ENCODE measurements at regions of chr6 and their contacts with region 1.

Region 1: DNA sequence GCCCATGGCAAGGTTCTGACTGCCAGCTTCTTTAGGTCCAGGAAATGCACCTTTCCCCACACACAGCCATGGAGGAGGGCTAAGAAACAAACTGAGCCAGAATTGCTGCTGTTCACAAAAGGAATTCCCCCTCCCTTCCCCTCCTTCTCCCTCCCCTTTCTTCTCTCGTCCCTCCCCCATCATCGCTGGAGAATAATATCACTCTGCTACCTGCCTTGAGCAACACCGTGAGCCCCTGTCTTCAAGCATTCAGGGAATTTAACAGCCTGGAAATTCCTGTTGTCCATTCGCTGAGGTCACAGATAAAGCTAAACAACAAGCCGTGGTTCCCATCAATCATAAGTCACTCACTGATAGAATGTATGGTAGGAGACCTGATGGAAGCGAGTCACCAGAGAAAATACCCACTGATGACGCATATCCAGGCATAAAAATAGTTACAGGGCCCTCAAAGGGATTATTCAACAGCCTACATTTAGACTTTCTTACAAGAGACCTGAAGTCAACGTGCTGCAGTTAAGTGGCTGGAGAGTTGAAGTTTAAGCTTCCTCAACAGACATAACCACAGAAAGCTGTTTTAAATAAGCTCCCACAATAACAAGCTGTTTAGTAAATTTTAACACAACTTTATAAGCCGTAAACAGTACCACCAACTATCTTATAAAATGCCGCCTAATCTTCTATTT is 59.7 kb downstream of the HIVEP2 start:
- DNase-seq: peak in 10 of 14 experiments; percentile 17 to 93 (median 48)
- ATAC-seq: peak; percentile 85
- H3K4me3 ChIP-seq: peak overlapping the region; percentile 45
- H3K4me3 Mint-ChIP-seq: peak overlapping the region; percentile 95
- H3K27ac ChIP-seq: peak overlapping the region; percentile 75 to 81
- H3K27ac Mint-ChIP-seq: peak overlapping the region; percentile 91
- H3K4me1 ChIP-seq: peaks cover 43% of the 10 kb centered on the region
- H3K4me1 Mint-ChIP-seq: peaks cover 93% of the 10 kb centered on the region
- H3K27me3 ChIP-seq: no peaks in the 10 kb centered on the region
- H3K27me3 Mint-ChIP-seq: no peaks in the 10 kb centered on the region
- CTCF ChIP-seq: no peak

Region 2: DNA sequence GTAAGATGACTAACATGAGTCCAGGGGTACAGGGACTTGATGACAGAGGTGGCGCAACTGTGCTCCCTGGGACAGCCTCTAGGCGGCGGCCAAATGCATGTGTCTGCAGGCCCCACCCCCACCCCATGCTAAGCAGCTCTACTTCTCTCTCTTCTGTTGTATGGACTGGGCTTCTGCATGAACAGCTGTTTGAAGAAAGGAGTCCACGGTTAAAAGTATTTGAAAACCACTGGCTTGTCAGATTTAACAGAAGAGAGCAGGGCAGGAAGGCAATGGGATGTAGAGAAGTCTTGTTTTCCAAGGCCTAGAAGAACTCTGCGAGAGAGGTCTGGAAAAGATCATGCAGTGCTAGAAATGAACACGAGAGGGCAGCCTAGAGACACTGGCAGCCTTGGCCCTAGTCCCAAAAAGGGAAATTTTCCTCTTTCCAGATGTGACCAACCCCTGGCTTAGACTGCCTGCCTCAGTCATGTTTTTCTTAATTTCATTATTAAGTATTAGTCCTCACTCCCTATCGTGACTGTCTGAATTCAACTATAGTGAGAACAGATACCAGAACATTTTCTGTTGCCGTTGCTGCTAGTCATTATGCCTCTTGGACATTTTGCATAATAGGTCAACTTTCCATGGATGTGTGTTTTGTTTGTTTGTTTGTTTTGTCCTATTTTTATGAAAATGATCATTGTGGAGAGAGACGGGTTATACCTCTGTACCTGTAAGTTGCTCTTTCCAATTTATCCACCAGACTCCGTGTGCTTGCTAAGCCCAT is 318.5 kb before region 1 on chr6:
- CTCF ChIA-PET with region 1: no interaction called
- POLR2A ChIA-PET with region 1: interaction called, 3 read pairs
- intact Hi-C with region 1: loop called in 1 of 2 experiments (anchors 10 kb)
- DNase-seq: peak; percentile 14 to 76 (median 47)
- ATAC-seq: peak; percentile 62
- H3K4me3 ChIP-seq: no peak overlapping the region
- H3K4me3 Mint-ChIP-seq: peak overlapping the region; percentile 57
- H3K27ac ChIP-seq: no peak overlapping the region
- H3K27ac Mint-ChIP-seq: peak overlapping the region; percentile 79
- H3K4me1 ChIP-seq: peaks cover 35% of the 10 kb centered on the region
- H3K4me1 Mint-ChIP-seq: peaks cover 77% of the 10 kb centered on the region
- H3K27me3 ChIP-seq: no peaks in the 10 kb centered on the region
- H3K27me3 Mint-ChIP-seq: no peaks in the 10 kb centered on the region
- CTCF ChIP-seq: peak; percentile 82

Region 3: DNA sequence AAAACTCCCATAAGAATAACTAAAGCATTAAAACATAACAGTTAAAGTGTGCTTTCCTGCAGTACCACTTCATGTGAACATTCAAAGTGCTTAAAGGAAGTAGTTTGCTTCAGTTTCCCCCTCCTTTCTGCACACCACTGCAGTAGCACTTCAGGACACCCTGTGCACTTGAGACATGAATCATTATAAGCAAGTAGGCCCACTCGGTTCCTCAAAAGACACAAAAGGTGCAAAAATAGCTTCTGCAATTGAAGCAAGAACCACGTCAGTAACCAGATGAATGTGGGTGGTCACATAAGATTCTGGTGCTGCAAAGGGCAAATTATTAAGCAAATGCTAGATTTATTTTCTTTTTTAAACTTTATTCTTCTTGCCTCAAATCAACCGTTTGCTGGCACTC is 101.0 kb before region 1 on chr6:
- CTCF ChIA-PET with region 1: no interaction called
- POLR2A ChIA-PET with region 1: no interaction called
- intact Hi-C with region 1: loop called (anchors 5 kb)
- DNase-seq: peak in 4 of 14 experiments; percentile 32 to 52 (median 39)
- ATAC-seq: peak; percentile 75
- H3K4me3 ChIP-seq: no peak overlapping the region
- H3K4me3 Mint-ChIP-seq: peak overlapping the region; percentile 48
- H3K27ac ChIP-seq: no peak overlapping the region
- H3K27ac Mint-ChIP-seq: peak overlapping the region; percentile 70
- H3K4me1 ChIP-seq: peaks cover 12% of the 10 kb centered on the region
- H3K4me1 Mint-ChIP-seq: peaks cover 73% of the 10 kb centered on the region
- H3K27me3 ChIP-seq: no peaks in the 10 kb centered on the region
- H3K27me3 Mint-ChIP-seq: no peaks in the 10 kb centered on the region
- CTCF ChIP-seq: no peak

Region 4: DNA sequence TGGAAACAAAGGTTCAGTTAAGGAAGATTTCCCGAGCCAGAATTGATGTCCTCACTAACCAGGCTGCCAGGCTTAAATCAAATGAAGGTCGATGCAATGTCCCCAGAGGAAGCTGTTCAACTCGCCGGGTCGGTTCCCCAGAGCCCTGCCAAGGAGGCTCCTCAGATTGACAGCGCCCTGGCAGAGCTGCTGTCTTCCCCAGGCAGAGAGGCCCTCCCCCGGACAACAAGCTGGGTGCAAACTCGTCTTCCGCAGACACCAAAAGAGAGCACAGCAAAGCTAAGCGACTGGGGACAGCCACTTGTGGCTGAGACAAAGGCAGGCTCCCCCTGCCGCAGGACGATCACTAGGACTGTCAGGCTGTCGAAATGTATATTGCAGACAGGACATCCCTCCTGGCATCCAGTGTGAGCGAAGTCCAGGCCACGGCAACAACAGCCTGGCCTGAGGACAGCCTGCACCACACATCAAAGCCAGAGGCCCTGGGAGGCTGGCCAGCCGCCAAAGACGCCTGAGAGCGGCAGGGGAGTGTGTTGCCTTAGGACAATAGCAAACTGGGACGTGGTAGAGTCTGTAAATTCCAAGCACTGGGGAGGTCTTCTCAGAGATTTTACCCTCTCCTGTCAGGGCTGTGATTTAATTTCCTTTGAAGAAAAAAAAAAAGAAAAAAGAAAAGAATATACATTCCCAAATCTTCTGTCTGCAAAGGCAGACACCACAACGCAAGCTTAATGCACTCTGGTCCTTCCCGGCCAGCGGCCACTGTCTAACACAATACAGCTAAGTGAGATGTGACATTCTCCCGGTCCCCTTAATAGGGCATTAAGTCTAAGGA is 39.5 kb before region 1 on chr6:
- CTCF ChIA-PET with region 1: interaction called, 10 read pairs
- POLR2A ChIA-PET with region 1: interaction called, 54 read pairs
- intact Hi-C with region 1: loop called (anchors 1 to 2 kb)
- DNase-seq: peak; percentile 48 to 84 (median 66)
- ATAC-seq: peak; percentile 50
- H3K4me3 ChIP-seq: peak overlapping the region; percentile 53
- H3K4me3 Mint-ChIP-seq: peak overlapping the region; percentile 85
- H3K27ac ChIP-seq: peak overlapping the region; percentile 88 to 93
- H3K27ac Mint-ChIP-seq: peak overlapping the region; percentile 94
- H3K4me1 ChIP-seq: peaks cover 49% of the 10 kb centered on the region
- H3K4me1 Mint-ChIP-seq: peaks cover 97% of the 10 kb centered on the region
- H3K27me3 ChIP-seq: no peaks in the 10 kb centered on the region
- H3K27me3 Mint-ChIP-seq: no peaks in the 10 kb centered on the region
- CTCF ChIP-seq: no peak

Region 5: GRCh38 chr6:142871910-142872331 is 13.4 kb before region 1 on chr6:
- CTCF ChIA-PET with region 1: interaction called, 4 read pairs
- POLR2A ChIA-PET with region 1: interaction called, 25 read pairs
- intact Hi-C with region 1: loop called in 1 of 2 experiments (anchors 1 kb)
- DNase-seq: peak in 9 of 14 experiments; percentile 21 to 91 (median 54)
- ATAC-seq: peak; percentile 89
- H3K4me3 ChIP-seq: no peak overlapping the region
- H3K4me3 Mint-ChIP-seq: peak overlapping the region; percentile 4
- H3K27ac ChIP-seq: peak overlapping the region; percentile 22 to 56
- H3K27ac Mint-ChIP-seq: peak overlapping the region; percentile 91
- H3K4me1 ChIP-seq: peaks cover 50% of the 10 kb centered on the region
- H3K4me1 Mint-ChIP-seq: peaks cover 94% of the 10 kb centered on the region
- H3K27me3 ChIP-seq: no peaks in the 10 kb centered on the region
- H3K27me3 Mint-ChIP-seq: no peaks in the 10 kb centered on the region
- CTCF ChIP-seq: no peak

Region 6: DNA sequence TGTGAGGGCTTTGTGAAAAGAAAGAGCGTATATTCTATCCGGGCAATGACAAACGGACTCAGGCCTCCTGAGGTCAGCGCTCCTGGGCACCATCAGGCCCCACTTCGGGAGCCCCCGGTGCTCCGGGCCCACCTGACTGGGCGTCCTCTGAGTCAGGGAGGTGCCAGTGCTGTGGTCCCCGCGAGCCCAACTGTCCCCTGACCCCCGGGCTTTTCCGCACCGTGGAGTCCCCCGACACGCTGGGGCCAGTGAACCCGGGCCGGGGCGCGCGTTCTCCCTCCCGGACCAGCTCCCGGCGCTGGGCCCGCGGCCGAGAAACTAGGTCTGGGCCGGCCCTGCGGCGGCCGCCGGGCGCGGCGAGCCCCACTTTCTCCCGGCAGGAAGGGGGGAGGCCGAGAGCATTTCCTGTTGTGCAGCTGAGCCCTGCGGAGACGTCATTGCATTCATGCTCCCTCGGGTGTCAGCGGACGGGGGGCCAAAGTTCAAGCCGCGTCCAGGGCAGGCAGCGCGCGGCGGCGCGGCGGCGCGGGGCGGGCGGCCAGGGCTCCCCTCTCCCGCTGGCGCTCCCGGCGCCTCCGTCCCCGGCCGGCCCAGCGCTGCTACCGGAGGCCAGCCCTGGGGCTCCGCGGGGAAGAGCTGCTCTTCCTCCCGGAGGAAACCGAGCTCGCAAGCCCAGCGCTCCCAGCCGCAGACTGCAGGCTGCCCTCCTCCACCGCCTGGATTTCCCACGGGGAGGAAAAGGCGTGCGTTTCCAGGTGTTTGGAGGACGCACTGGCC is 41.4 kb after region 1 on chr6:
- CTCF ChIA-PET with region 1: interaction called, 3 read pairs
- POLR2A ChIA-PET with region 1: interaction called, 42 read pairs
- intact Hi-C with region 1: loop called in 1 of 2 experiments (anchors 1 kb)
- DNase-seq: peak; percentile 64 to 94 (median 74)
- ATAC-seq: peak; percentile 78
- H3K4me3 ChIP-seq: peak overlapping the region; percentile 85
- H3K4me3 Mint-ChIP-seq: peak overlapping the region; percentile 95
- H3K27ac ChIP-seq: peak overlapping the region; percentile 98 to 99
- H3K27ac Mint-ChIP-seq: peak overlapping the region; percentile 95
- H3K4me1 ChIP-seq: peaks cover 9% of the 10 kb centered on the region
- H3K4me1 Mint-ChIP-seq: peaks cover 66% of the 10 kb centered on the region
- H3K27me3 ChIP-seq: no peaks in the 10 kb centered on the region
- H3K27me3 Mint-ChIP-seq: no peaks in the 10 kb centered on the region
- CTCF ChIP-seq: no peak

Region 7: GRCh38 chr6:143112084-143112768 is 226.9 kb after region 1 on chr6:
- CTCF ChIA-PET with region 1: no interaction called
- POLR2A ChIA-PET with region 1: no interaction called
- intact Hi-C with region 1: no loop called
- DNase-seq: no peak
- ATAC-seq: no peak
- H3K4me3 ChIP-seq: no peak overlapping the region
- H3K4me3 Mint-ChIP-seq: no peak overlapping the region
- H3K27ac ChIP-seq: no peak overlapping the region
- H3K27ac Mint-ChIP-seq: no peak overlapping the region
- H3K4me1 ChIP-seq: no peaks in the 10 kb centered on the region
- H3K4me1 Mint-ChIP-seq: no peaks in the 10 kb centered on the region
- H3K27me3 ChIP-seq: no peaks in the 10 kb centered on the region
- H3K27me3 Mint-ChIP-seq: no peaks in the 10 kb centered on the region
- CTCF ChIP-seq: no peak